ENCODE measurements at regions of chr2 and their contacts with region 1.

Region 1: DNA sequence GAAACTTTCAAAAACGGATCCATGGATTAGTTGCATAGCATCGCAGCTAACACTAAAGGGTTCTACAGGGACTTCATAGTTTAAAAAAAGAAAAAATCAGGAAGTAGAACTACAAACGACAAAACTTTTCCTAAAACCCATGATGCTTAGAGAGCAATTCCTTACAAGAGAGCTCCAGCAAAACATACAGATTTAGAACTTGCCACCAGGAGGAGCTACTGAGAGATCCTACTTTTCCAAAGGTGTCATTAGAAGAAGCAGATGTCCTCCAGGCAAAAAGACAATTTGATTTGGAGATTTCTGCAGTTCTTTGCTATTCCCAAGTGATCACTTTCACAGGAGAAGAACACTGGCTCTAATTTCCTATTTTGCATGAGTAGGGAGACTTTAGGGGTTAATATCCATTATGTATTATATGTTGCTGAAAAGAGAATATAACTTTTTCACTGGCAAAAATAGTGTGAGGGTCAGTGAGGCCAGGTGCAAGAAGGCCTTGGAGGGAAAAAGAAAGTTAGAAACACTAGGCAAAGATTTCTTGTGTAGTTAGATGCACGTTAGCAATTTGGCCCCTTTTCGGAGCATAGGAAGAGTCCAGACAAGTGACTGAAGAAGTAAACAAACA is 436.2 kb downstream of the SUCLG1 start:
- DNase-seq: peak in 4 of 9 donors; percentile 0 to 15 (median 2)
- ATAC-seq: no peak
- H3K4me3 ChIP-seq: no peak overlapping the region
- H3K4me3 Mint-ChIP-seq: no peak overlapping the region
- H3K27ac ChIP-seq: no peak overlapping the region
- H3K27ac Mint-ChIP-seq: no peak overlapping the region
- H3K4me1 ChIP-seq: no peaks in the 10 kb centered on the region
- H3K4me1 Mint-ChIP-seq: no peaks in the 10 kb centered on the region
- H3K27me3 ChIP-seq: no peaks in the 10 kb centered on the region
- H3K27me3 Mint-ChIP-seq: peaks cover 0 to 21% (median 11%) of the 10 kb centered on the region in 5 donors

Region 2: DNA sequence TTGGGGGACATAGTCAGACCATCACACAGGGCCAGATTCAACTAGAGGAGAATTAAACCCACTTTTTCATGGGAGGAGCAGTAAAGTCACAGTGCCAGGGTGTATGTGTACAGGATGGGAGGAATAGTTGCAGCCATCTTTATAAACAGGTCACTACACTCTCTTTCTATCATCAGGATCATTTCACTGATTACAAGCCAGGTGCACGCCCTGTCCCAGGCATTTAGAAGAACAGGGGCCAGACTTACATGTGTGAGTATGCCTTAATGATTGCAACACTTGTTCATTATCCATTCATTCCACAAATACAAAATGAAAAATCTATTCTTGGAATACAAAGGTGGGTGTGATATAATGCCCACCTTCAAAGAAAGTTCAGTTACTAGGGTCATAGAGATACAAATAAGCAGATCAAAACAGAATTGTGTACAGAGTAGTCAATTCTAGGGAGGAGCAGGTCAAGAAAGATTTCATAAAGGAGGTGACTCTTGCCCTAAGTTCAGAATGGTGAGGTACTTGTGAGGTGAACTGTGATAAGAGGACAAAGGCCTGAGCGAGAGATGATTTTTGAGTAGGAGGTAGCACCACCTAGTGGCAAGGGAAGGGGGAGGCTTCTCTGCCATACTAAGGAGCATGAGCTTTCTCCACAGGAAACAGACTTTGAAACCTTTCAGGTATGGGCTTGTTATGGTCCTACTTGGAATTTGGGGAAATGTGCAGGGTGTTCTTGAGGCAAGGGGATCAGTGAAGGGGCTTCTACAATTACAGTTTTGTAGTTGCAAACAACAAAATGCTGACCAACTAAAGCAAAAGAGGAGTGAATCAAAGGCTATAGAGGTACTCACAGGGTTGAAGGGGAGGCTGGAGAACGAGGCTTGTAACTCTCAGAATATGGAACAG is 279.8 kb after region 1 on chr2:
- CTCF ChIA-PET with region 1: no interaction called
- POLR2A ChIA-PET with region 1: no interaction called
- intact Hi-C with region 1: loop called in 1 of 2 experiments (anchors 1 kb)
- DNase-seq: peak in 4 of 9 donors; percentile 14 to 35 (median 21)
- ATAC-seq: peak; percentile 61
- H3K4me3 ChIP-seq: no peak overlapping the region
- H3K4me3 Mint-ChIP-seq: no peak overlapping the region
- H3K27ac ChIP-seq: no peak overlapping the region
- H3K27ac Mint-ChIP-seq: no peak overlapping the region
- H3K4me1 ChIP-seq: no peaks in the 10 kb centered on the region
- H3K4me1 Mint-ChIP-seq: peaks cover 0 to 6% (median 0%) of the 10 kb centered on the region in 7 donors
- H3K27me3 ChIP-seq: no peaks in the 10 kb centered on the region
- H3K27me3 Mint-ChIP-seq: peaks cover 3 to 25% (median 21%) of the 10 kb centered on the region in 5 donors

Region 3: GRCh38 chr2:84314901-84315330 is 292.0 kb after region 1 on chr2:
- CTCF ChIA-PET with region 1: no interaction called
- POLR2A ChIA-PET with region 1: no interaction called
- intact Hi-C with region 1: loop called (anchors 1 to 2 kb)
- DNase-seq: peak; percentile 44 to 76 (median 69)
- ATAC-seq: peak; percentile 81
- H3K4me3 ChIP-seq: no peak overlapping the region
- H3K4me3 Mint-ChIP-seq: peak overlapping the region in 1 of 10 donors; percentile 9
- H3K27ac ChIP-seq: no peak overlapping the region
- H3K27ac Mint-ChIP-seq: no peak overlapping the region
- H3K4me1 ChIP-seq: no peaks in the 10 kb centered on the region
- H3K4me1 Mint-ChIP-seq: peaks cover 2 to 6% (median 5%) of the 10 kb centered on the region in 7 donors
- H3K27me3 ChIP-seq: no peaks in the 10 kb centered on the region
- H3K27me3 Mint-ChIP-seq: peaks cover 4 to 19% (median 12%) of the 10 kb centered on the region in 5 donors

Region 4: GRCh38 chr2:84631047-84631446 is 608.1 kb after region 1 on chr2:
- CTCF ChIA-PET with region 1: no interaction called
- POLR2A ChIA-PET with region 1: no interaction called
- intact Hi-C with region 1: loop called in 1 of 2 experiments (anchors 10 kb)
- DNase-seq: peak in 6 of 9 donors; percentile 21 to 57 (median 50)
- ATAC-seq: peak; percentile 69
- H3K4me3 ChIP-seq: no peak overlapping the region
- H3K4me3 Mint-ChIP-seq: peak overlapping the region in 4 of 10 donors; percentile 5 to 60 (median 34)
- H3K27ac ChIP-seq: no peak overlapping the region
- H3K27ac Mint-ChIP-seq: peak overlapping the region in 5 of 9 donors; percentile 12 to 80 (median 33)
- H3K4me1 ChIP-seq: peaks cover 0 to 15% of the 10 kb centered on the region in 2 donors
- H3K4me1 Mint-ChIP-seq: peaks cover 16 to 56% (median 52%) of the 10 kb centered on the region in 7 donors
- H3K27me3 ChIP-seq: no peaks in the 10 kb centered on the region
- H3K27me3 Mint-ChIP-seq: peaks cover 0 to 2% (median 0%) of the 10 kb centered on the region in 5 donors